ENCODE measurements at regions of chrX and their contacts with region 1.

Region 1: DNA sequence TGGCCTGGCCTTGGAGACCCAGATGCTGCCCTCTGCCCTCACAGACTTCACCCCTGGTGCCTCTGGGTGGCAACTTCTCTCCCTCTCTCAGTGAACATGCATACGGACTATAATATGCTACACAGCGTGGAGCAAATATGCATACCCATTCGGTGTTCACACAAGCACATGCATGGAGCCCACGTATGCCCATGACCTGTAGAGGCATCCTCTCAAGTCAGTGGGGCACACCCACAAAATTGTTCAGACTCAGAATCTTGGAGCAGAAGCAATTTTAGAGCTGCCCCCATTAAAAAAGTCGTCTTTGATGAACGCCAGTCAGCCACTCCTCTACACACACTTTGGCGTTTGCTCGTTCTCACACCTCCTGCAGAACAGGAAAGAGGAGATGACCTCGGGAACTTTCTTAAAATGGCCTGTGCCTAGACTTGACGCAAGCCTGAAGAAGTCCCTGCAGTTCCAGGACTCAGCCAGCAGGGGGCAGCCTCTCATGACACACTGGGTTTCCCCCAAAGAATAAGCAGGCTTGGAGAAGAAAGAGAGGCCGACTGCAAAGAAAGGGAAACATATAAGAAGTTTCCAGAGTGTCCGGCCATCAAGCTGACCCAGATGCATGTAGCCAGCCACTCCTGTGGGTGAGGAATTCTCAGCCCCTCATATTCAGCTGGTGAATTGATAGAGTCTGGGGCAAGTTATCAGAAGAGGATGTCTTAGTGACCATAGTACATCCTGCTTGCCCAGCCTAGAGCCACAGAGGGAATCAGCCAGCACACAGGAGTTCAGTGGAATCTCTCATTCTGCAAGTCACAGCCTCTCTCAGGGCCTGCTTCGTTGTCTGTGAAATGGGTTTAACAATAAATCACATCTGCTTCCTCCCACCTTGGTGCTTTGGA is 17.3 kb downstream of the APLN start:
- DNase-seq: peak; percentile 48 to 80 (median 63)
- ATAC-seq: peak; percentile 92
- H3K4me3 ChIP-seq: no peak overlapping the region
- H3K4me3 Mint-ChIP-seq: no peak overlapping the region
- H3K27ac ChIP-seq: no peak overlapping the region
- H3K27ac Mint-ChIP-seq: peak overlapping the region in 3 of 9 donors; percentile 34 to 68 (median 55)
- H3K4me1 ChIP-seq: peaks cover 0 to 4% of the 10 kb centered on the region in 2 donors
- H3K4me1 Mint-ChIP-seq: peaks cover 0 to 10% (median 0%) of the 10 kb centered on the region in 7 donors
- H3K27me3 ChIP-seq: no peaks in the 10 kb centered on the region
- H3K27me3 Mint-ChIP-seq: no peaks in the 10 kb centered on the region

Region 2: DNA sequence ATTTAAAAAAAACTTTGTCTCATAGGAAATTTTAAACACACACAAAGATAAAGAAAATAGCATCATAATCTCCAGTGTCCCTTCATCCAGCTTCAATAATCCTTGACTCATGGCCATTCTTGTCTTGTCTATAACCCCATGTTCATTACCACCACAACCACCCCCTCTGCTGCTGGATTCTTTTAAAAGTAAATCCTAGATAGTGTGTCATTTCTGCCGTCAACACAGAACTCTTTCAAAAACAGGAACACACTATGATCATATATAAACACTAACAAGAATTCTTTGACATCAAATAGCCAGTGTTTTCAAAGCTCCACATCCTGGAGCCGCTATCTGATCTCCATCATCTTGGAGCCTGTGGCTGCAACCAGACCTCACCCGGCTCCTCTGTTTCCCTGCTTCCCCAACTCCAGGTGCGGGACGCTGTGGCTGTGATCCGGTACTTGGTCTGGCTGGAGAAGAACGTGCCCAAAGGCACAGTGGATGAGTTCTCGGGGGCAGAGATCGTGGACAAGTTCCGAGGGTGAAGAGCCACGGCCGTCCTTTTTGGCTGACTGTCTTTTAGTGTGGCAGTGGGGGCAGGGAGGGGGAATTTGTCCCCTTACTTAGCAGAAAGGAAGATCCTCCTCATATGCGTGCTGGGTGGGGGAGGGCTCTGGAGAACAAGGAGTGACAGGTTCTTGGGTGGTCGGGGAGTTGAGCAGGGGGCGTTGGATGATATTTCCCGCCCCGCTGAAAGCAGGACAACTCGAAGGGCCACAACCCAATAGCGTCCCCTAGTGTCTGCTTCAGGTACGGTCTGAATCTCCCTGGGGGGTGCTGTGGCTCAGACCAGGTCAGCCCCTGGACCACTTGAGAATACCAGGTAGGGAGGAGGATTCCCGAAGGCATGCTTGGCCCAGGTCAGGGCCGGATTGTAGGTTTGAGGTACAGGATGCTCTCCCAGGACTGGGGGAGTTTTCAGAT is 116.9 kb after region 1 on chrX:
- CTCF ChIA-PET with region 1: no interaction called
- POLR2A ChIA-PET with region 1: no interaction called
- intact Hi-C with region 1: loop called in 1 of 2 experiments (anchors 5 kb)
- DNase-seq: no peak
- ATAC-seq: peak; percentile 44
- H3K4me3 ChIP-seq: no peak overlapping the region
- H3K4me3 Mint-ChIP-seq: peak overlapping the region in 9 of 10 donors; percentile 10 to 74 (median 47)
- H3K27ac ChIP-seq: no peak overlapping the region
- H3K27ac Mint-ChIP-seq: peak overlapping the region in 7 of 9 donors; percentile 45 to 71 (median 64)
- H3K4me1 ChIP-seq: peaks cover 37 to 44% of the 10 kb centered on the region in 2 donors
- H3K4me1 Mint-ChIP-seq: peaks cover 26 to 56% (median 53%) of the 10 kb centered on the region in 7 donors
- H3K27me3 ChIP-seq: no peaks in the 10 kb centered on the region
- H3K27me3 Mint-ChIP-seq: no peaks in the 10 kb centered on the region

Region 3: GRCh38 chrX:129876771-129877305 is 239.4 kb after region 1 on chrX:
- CTCF ChIA-PET with region 1: no interaction called
- POLR2A ChIA-PET with region 1: no interaction called
- intact Hi-C with region 1: loop called in 1 of 2 experiments (anchors 1 kb)
- DNase-seq: no peak
- ATAC-seq: no peak
- H3K4me3 ChIP-seq: no peak overlapping the region
- H3K4me3 Mint-ChIP-seq: no peak overlapping the region
- H3K27ac ChIP-seq: no peak overlapping the region
- H3K27ac Mint-ChIP-seq: no peak overlapping the region
- H3K4me1 ChIP-seq: no peaks in the 10 kb centered on the region
- H3K4me1 Mint-ChIP-seq: no peaks in the 10 kb centered on the region
- H3K27me3 ChIP-seq: no peaks in the 10 kb centered on the region
- H3K27me3 Mint-ChIP-seq: no peaks in the 10 kb centered on the region

Measured in naive thymus-derived CD4-positive, alpha-beta T cell (primary cell).